ENCODE measurements at regions of chrX and their contacts with region 1.

Region 1: DNA sequence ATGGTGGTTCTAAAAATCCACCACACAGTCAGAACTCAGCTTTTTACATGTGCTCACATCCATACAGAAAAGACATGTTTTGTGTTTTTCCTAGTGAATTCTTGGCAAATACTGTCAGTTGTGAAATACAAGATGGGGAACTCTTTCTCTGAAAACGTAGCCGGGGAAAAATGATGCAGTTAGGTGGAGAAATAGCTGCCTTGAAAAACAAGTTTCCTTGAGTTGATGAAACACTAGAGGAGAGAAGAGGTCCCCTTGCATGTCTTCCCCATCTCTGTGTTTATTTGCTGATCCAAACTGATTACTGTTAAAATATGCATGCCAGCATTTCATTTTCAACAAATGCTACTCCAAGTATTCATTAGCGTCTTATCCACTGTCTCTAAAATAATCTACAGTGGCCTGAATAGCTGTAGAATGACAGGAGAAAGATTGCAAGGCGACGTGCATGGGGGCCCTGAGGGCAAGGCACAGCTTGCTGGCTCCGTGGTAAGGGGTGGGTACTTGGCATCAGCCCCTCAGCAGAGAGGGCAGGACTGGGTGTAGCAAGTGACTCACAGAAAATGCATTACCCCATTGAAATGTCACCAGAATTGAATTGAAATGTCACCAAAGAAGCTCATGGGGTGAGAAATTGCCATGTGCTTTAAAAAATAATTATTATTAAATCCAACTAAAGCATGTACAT is 48.1 kb upstream of the TBL1X start:
- DNase-seq: peak in 1 of 2 donors; percentile 72
- H3K4me3 ChIP-seq: peak overlapping the region in 1 of 2 donors; percentile 11
- H3K27ac ChIP-seq: peak overlapping the region; percentile 32 to 37
- H3K4me1 ChIP-seq: peaks cover 0 to 3% of the 10 kb centered on the region in 2 donors
- H3K27me3 ChIP-seq: no peaks in the 10 kb centered on the region
- CTCF ChIP-seq: no peak

Region 2: GRCh38 chrX:8913655-8914409 is 502.9 kb before region 1 on chrX:
- intact Hi-C with region 1: loop called (anchors 10 kb)
- DNase-seq: peak in 1 of 2 donors; percentile 73
- H3K4me3 ChIP-seq: peak overlapping the region in 1 of 2 donors; percentile 32
- H3K27ac ChIP-seq: peak overlapping the region; percentile 54 to 70
- H3K4me1 ChIP-seq: peaks cover 3 to 15% of the 10 kb centered on the region in 2 donors
- H3K27me3 ChIP-seq: no peaks in the 10 kb centered on the region
- CTCF ChIP-seq: no peak

Region 3: DNA sequence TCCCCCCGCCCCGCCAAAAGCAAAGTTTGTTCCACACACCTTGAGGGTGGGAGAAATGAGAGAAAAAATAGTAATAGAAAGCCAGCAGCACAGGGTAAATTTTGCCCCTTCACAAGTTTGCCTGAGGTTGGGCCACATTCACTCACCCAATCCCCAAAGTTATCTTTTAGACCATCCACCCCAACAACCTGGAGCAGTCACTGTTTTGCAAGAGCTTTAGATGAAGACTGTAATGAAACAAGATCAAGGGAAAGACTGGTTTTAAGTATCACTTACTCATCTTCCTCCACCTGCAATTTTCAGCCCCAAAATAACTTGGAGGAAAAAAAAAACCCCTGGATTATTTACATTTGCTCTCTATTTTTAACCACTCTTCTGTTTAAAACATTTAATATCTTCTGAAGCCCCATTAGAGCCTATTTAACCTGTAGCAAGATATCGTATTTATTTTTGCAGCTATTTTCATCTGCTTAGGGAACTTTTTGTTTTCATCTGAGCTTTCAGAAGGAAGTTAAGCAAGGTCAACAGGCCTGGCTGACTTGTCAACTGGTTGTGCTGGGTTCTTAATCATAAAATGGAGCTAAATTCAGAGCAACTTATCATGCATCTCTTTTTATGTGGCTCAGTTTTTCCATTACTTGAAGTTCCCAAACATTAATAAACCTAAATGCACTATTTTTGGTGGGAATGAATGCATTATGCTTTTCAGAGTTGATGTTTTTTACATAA is 23.5 kb after region 1 on chrX:
- intact Hi-C with region 1: loop called (anchors 2 kb)
- DNase-seq: peak in 1 of 2 donors; percentile 75
- H3K4me3 ChIP-seq: peak overlapping the region in 1 of 2 donors; percentile 4
- H3K27ac ChIP-seq: peak overlapping the region; percentile 63 to 79
- H3K4me1 ChIP-seq: peaks cover 0 to 22% of the 10 kb centered on the region in 2 donors
- H3K27me3 ChIP-seq: no peaks in the 10 kb centered on the region
- CTCF ChIP-seq: no peak

Measured in ascending aorta (tissue), 2 donors.